Activated T-helper 1 cell treated with anti-CD3 and anti-CD28 coated beads, Interleukin-12 subunit alpha, Interleukin-12 subunit beta, Interleukin-2, Interleukin-4 antibody, amounts not matched to agents 30 ng/mL and 10 ng/mL and 1 ng/mL, durations not matched to agents 14 hours and 24 hours and 36 hours (primary cell): ENCODE measurements at regions of chr4 and their contacts with region 1.

Region 1: GRCh38 chr4:165131247-165131832 is 18.7 kb upstream of the TMEM192 start:
- DNase-seq: peak; percentile 65
- H3K4me3 Mint-ChIP-seq: no peak overlapping the region
- H3K27ac Mint-ChIP-seq: no peak overlapping the region
- H3K4me1 Mint-ChIP-seq: peaks cover 18% of the 10 kb centered on the region
- H3K27me3 Mint-ChIP-seq: peaks cover 5% of the 10 kb centered on the region

Region 2: DNA sequence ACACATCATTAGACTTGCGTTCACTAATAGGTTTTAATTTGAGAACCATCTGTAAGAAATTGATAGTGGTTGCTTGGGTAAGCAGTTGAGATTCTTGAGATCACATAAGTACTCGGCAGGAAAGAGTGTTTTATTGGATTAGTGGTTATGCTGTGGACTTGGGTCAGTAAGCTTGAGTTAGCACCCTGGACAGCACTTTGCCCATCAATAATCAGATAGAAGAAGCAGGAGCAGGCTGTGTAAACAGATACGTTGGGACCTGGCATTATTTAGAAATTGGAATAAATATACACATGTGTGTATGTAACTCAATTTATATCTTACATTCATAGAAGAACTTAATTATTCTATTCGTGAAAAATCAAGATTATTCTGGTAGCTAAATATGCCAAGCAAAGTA is 734.9 kb before region 1 on chr4:
- intact Hi-C with region 1: no loop called
- DNase-seq: no peak
- H3K4me3 Mint-ChIP-seq: no peak overlapping the region
- H3K27ac Mint-ChIP-seq: no peak overlapping the region
- H3K4me1 Mint-ChIP-seq: no peaks in the 10 kb centered on the region
- H3K27me3 Mint-ChIP-seq: no peaks in the 10 kb centered on the region

Region 3: GRCh38 chr4:164536814-164537213 is 594.5 kb before region 1 on chr4:
- intact Hi-C with region 1: no loop called
- DNase-seq: no peak
- H3K4me3 Mint-ChIP-seq: no peak overlapping the region
- H3K27ac Mint-ChIP-seq: no peak overlapping the region
- H3K4me1 Mint-ChIP-seq: no peaks in the 10 kb centered on the region
- H3K27me3 Mint-ChIP-seq: no peaks in the 10 kb centered on the region

Region 4: GRCh38 chr4:165112368-165113139 is 18.8 kb before region 1 on chr4 and contains the start of gene TMEM192:
- intact Hi-C with region 1: loop called (anchors 2 kb)
- DNase-seq: peak; percentile 87
- H3K4me3 Mint-ChIP-seq: peak within 1 kb of the TSS; percentile 91
- H3K27ac Mint-ChIP-seq: peak within 1 kb of the TSS; percentile 86
- H3K4me1 Mint-ChIP-seq: peaks cover 12% of the 10 kb centered on the region
- H3K27me3 Mint-ChIP-seq: peaks cover 7% of the 10 kb centered on the region
- total RNA-seq, gene TMEM192: 8.1 and 10.5 TPM in 2 replicates

Region 5: DNA sequence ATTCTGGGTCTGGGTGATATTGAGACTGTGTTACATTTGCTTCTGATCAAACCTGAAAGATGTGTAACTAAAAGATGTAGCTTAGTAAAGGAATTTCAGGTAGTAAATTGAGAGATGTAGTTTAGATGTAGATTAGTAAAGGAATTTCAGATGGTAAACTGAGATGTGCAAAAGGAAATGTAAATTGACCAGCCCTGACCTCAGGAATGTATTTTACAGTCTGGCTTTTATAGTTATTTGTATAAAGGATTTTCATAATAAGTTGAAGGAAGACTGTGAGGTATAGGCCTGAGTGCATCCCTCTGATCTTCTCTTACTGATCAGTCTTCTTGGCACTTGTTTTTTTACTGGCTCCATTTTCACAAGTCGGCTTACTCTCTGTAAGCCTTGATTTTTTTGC is 79.2 kb after region 1 on chr4:
- intact Hi-C with region 1: no loop called
- DNase-seq: no peak
- H3K4me3 Mint-ChIP-seq: peak overlapping the region; percentile 64
- H3K27ac Mint-ChIP-seq: no peak overlapping the region
- H3K4me1 Mint-ChIP-seq: peaks cover 77% of the 10 kb centered on the region
- H3K27me3 Mint-ChIP-seq: no peaks in the 10 kb centered on the region

Region 6: GRCh38 chr4:165301833-165302232 is 170.5 kb after region 1 on chr4:
- intact Hi-C with region 1: loop called (anchors 1 kb)
- DNase-seq: no peak
- H3K4me3 Mint-ChIP-seq: peak overlapping the region; percentile 73
- H3K27ac Mint-ChIP-seq: peak overlapping the region; percentile 74
- H3K4me1 Mint-ChIP-seq: peaks cover 33% of the 10 kb centered on the region
- H3K27me3 Mint-ChIP-seq: no peaks in the 10 kb centered on the region

Region 7: GRCh38 chr4:165343353-165344191 is 212.2 kb after region 1 on chr4:
- intact Hi-C with region 1: loop called (anchors 1 kb)
- DNase-seq: no peak
- H3K4me3 Mint-ChIP-seq: no peak overlapping the region
- H3K27ac Mint-ChIP-seq: no peak overlapping the region
- H3K4me1 Mint-ChIP-seq: peaks cover 9% of the 10 kb centered on the region
- H3K27me3 Mint-ChIP-seq: peaks cover 3% of the 10 kb centered on the region

Region 8: GRCh38 chr4:165369522-165369921 is 238.2 kb after region 1 on chr4:
- intact Hi-C with region 1: no loop called
- DNase-seq: no peak
- H3K4me3 Mint-ChIP-seq: no peak overlapping the region
- H3K27ac Mint-ChIP-seq: no peak overlapping the region
- H3K4me1 Mint-ChIP-seq: no peaks in the 10 kb centered on the region
- H3K27me3 Mint-ChIP-seq: peaks cover 31% of the 10 kb centered on the region